PC-3 (cell line): ENCODE measurements at regions of chr13 and their contacts with region 1.

Region 1: GRCh38 chr13:74243637-74244526 is 109.7 kb upstream of the KLF12 start:
- DNase-seq: peak; percentile 73
- ATAC-seq: peak; percentile 91
- H3K4me3 ChIP-seq: 0 out of 2 replicates have a peak overlapping the region, but pooled peaks have one; percentile 11
- H3K27ac ChIP-seq: peak overlapping the region; percentile 93
- H3K4me1 ChIP-seq: peaks cover 14% of the 10 kb centered on the region
- H3K27me3 ChIP-seq: no peaks in the 10 kb centered on the region
- CTCF ChIP-seq: no peak

Region 2: GRCh38 chr13:74070065-74070464 is 173.8 kb before region 1 on chr13:
- CTCF ChIA-PET with region 1: no interaction called
- POLR2A ChIA-PET with region 1: interaction called, 10 read pairs
- intact Hi-C with region 1: no loop called
- DNase-seq: no peak
- ATAC-seq: no peak
- H3K4me3 ChIP-seq: no peak overlapping the region
- H3K27ac ChIP-seq: no peak overlapping the region
- H3K4me1 ChIP-seq: peaks cover 6% of the 10 kb centered on the region; the same call in 1 of the 2 replicates
- H3K27me3 ChIP-seq: no peaks in the 10 kb centered on the region
- CTCF ChIP-seq: no peak